ENCODE measurements at regions of chr2 and their contacts with region 1.

Region 1: GRCh38 chr2:201071479-201072200 is at the starts of genes HYCC2 and NDUFB3:
- DNase-seq: peak; percentile 95
- ATAC-seq: peak; percentile 83
- H3K4me3 ChIP-seq: peak within 1 kb of the TSS; percentile 81
- H3K27ac ChIP-seq: peak within 1 kb of the TSS; percentile 84
- H3K4me1 ChIP-seq: peaks cover 24% of the 10 kb centered on the region
- H3K27me3 ChIP-seq: no peaks in the 10 kb centered on the region
- CTCF ChIP-seq: no peak
- total RNA-seq, gene HYCC2: 3.6 and 5.5 TPM in 2 replicates
- total RNA-seq, gene NDUFB3: 154 and 176 TPM in 2 replicates

Region 2: DNA sequence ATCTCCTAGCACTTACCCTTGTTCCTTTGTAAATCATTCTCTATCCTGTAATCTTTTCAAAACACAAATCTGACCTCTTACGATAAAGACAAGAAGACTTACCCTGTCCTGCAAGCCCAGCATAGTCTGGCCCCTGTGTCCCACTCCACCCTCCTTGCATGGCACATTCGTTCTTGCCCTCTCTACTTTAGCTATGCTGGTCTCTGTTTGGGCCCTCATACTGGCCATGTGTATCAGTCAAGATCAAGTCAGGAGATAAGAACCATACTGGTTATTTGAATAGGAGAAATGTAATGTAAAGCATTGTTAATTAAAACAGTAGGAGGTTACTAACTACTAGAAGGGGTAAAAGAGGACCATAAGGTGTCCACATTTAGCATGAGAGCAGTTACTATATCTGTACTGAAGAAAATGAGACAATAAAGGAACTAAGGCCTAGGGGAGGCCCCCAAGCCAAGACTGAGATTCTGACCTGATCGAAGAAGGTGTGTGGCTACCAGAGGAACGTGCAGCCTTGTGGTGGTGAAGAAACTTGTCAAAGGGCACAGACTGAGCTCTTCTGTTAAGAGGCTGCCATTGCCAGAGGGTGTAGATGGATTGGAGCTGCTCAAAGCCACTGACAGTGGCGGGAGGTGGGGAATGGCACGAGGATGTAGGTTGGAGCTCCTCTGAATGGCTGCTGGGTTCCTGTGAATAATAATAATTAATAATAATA is 642.5 kb before region 1 on chr2:
- CTCF ChIA-PET with region 1: no interaction called
- POLR2A ChIA-PET with region 1: no interaction called
- intact Hi-C with region 1: no loop called
- DNase-seq: no peak
- ATAC-seq: no peak
- H3K4me3 ChIP-seq: no peak overlapping the region
- H3K27ac ChIP-seq: no peak overlapping the region
- H3K4me1 ChIP-seq: no peaks in the 10 kb centered on the region
- H3K27me3 ChIP-seq: no peaks in the 10 kb centered on the region
- CTCF ChIP-seq: no peak

Region 3: DNA sequence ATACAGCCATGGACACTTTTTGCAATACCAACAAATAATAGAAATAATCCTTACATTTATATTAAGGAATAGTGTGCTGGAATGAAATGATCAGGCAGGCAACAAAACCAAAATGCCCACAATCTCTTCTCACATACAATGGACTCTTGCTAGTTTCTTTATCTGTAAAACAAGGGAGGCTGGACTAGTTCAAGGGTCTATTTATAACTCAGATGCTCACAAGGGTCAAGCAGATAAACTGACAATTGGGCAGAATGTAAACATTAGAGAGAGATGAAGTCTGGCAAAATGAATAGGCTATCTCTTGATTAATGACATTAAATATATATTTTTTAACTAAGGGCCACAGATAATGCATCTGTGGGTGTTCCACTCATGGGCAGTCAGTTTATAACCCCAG is 194.2 kb before region 1 on chr2:
- CTCF ChIA-PET with region 1: no interaction called
- POLR2A ChIA-PET with region 1: no interaction called
- intact Hi-C with region 1: no loop called
- DNase-seq: no peak
- ATAC-seq: no peak
- H3K4me3 ChIP-seq: no peak overlapping the region
- H3K27ac ChIP-seq: no peak overlapping the region
- H3K4me1 ChIP-seq: no peaks in the 10 kb centered on the region
- H3K27me3 ChIP-seq: no peaks in the 10 kb centered on the region
- CTCF ChIP-seq: no peak

Region 4: DNA sequence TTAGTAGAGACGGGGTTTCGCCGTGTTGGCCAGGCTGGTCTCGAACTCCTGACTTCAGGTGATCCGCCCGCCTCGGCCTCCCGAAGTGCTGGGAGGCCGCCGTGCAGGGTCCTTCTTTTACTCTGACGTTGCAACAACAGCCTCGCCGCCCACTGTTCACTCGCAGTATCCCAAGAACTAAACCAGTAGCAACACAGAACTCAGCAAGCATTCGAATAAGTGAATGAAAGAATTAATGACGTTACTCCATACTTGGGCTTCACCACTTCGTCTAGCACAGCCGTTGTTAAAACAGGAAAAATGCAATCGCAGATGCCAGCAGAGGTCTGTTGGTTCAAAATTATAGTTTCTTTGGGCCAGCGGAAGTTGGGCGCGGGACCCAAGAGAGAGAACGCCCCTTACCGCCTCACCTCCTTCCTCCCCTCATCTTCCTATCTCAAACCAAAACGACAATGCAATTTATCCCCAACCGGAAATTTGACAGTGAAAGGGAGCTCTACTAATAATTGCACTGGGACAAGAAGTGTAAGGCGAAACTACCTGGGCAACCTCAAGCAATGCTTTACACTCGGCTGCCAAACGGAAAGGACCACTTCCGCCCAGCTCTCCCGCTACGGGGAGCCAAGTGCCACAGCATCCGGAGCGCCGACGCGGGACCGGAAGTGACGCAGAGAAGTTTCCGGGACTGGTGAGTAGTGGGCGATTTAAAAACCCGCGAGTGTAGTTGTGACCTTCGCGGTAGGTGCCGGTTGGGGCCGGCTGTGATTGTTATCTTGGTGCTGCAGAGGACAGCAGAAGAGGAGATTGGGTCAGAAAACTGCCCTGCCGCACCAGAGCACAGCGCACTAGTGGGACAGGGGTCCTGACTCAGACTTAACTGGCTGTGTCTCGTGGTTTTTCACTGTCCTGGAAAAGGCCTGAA is 182.7 kb before region 1 on chr2 and contains the starts of genes NIF3L1 and PPIL3:
- CTCF ChIA-PET with region 1: no interaction called
- POLR2A ChIA-PET with region 1: no interaction called
- intact Hi-C with region 1: loop called (anchors 1 kb)
- DNase-seq: peak; percentile 99
- ATAC-seq: peak; percentile 82
- H3K4me3 ChIP-seq: peak within 1 kb of the TSS; percentile 87
- H3K27ac ChIP-seq: peak within 1 kb of the TSS; percentile 96
- H3K4me1 ChIP-seq: peaks cover 9% of the 10 kb centered on the region
- H3K27me3 ChIP-seq: no peaks in the 10 kb centered on the region
- CTCF ChIP-seq: no peak
- total RNA-seq, gene NIF3L1: 63.1 and 81.5 TPM in 2 replicates
- total RNA-seq, gene PPIL3: 25.9 and 37.1 TPM in 2 replicates

Region 5: DNA sequence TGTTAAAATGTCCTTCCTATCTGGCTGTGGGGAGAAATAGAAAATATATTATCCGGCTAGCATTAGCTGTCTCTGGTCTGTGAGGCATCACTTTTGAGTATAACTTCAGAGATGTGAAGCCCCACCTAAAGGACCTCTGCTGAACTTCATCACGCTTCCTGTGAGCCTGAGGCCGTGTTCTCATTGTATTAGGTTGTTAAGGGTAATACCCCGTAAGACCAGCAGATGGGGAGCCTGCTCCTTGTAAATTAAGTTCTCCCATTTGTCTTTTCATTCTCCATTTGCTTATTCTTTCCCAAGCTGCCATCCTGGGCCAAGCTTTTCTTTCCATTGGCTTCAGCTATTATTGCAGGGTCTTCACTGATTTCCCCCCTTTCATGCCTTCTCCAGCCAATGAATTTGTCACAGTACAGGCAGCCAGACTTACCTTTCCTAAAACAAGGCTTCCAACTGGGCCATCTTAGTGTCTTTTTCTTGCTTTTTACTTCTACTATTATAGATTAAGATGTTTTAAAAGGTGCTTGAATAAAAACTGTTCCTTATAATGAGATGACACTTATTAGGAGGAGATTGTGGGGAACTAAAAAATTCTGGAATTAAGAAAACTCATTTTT is 170.1 kb before region 1 on chr2:
- CTCF ChIA-PET with region 1: interaction called, 6 read pairs
- POLR2A ChIA-PET with region 1: no interaction called
- intact Hi-C with region 1: loop called (anchors 1 kb)
- DNase-seq: peak; percentile 94
- ATAC-seq: peak; percentile 92
- H3K4me3 ChIP-seq: no peak overlapping the region
- H3K27ac ChIP-seq: no peak overlapping the region
- H3K4me1 ChIP-seq: no peaks in the 10 kb centered on the region
- H3K27me3 ChIP-seq: no peaks in the 10 kb centered on the region
- CTCF ChIP-seq: peak; percentile 86

Region 6: GRCh38 chr2:200963124-200963917 is 108.3 kb before region 1 on chr2 and contains the start of gene ORC2:
- CTCF ChIA-PET with region 1: interaction called, 12 read pairs
- POLR2A ChIA-PET with region 1: interaction called, 3 read pairs
- intact Hi-C with region 1: loop called (anchors 1 kb)
- DNase-seq: peak; percentile 99
- ATAC-seq: peak; percentile 93
- H3K4me3 ChIP-seq: peak within 1 kb of the TSS; percentile 81
- H3K27ac ChIP-seq: peak within 1 kb of the TSS; percentile 58
- H3K4me1 ChIP-seq: peaks cover 55% of the 10 kb centered on the region
- H3K27me3 ChIP-seq: no peaks in the 10 kb centered on the region
- CTCF ChIP-seq: peak; percentile 68
- total RNA-seq, gene ORC2: 17.7 and 25.9 TPM in 2 replicates

Region 7: GRCh38 chr2:201118121-201118960 is 46.7 kb after region 1 on chr2:
- CTCF ChIA-PET with region 1: interaction called, 5 read pairs
- POLR2A ChIA-PET with region 1: interaction called, 6 read pairs
- intact Hi-C with region 1: loop called (anchors 1 kb)
- DNase-seq: peak; percentile 87
- ATAC-seq: peak; percentile 40
- H3K4me3 ChIP-seq: peak overlapping the region; percentile 75
- H3K27ac ChIP-seq: peak overlapping the region; percentile 96
- H3K4me1 ChIP-seq: peaks cover 17% of the 10 kb centered on the region
- H3K27me3 ChIP-seq: no peaks in the 10 kb centered on the region
- CTCF ChIP-seq: peak; percentile 70

Region 8: GRCh38 chr2:201158111-201158929 is 86.7 kb after region 1 on chr2:
- CTCF ChIA-PET with region 1: interaction called, 15 read pairs
- POLR2A ChIA-PET with region 1: no interaction called
- intact Hi-C with region 1: loop called (anchors 1 kb)
- DNase-seq: peak; percentile 86
- ATAC-seq: peak; percentile 87
- H3K4me3 ChIP-seq: no peak overlapping the region
- H3K27ac ChIP-seq: peak overlapping the region; percentile 86
- H3K4me1 ChIP-seq: peaks cover 9% of the 10 kb centered on the region
- H3K27me3 ChIP-seq: no peaks in the 10 kb centered on the region
- CTCF ChIP-seq: peak; percentile 90

Region 9: DNA sequence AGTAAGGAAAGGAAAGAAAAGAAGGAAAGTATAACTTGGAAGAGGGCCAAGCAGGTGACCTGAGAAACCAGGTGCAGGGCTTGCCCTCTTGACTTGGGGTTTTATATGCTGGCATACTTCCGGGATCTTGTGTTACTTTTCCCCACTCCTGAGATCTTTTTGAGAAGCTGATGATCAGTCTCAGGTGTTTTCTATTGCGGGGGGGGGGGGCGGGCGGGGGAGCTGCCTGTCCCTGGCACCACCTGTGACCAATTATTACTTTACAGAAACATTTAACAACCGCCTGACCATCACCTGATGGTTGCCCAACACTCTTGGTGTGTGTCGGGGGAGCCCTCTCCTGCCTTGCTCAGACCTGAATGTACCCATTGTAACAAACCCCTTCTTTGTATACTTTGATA is 104.4 kb after region 1 on chr2:
- CTCF ChIA-PET with region 1: interaction called, 3 read pairs
- POLR2A ChIA-PET with region 1: no interaction called
- intact Hi-C with region 1: loop called (anchors 2 kb)
- DNase-seq: no peak
- ATAC-seq: no peak
- H3K4me3 ChIP-seq: no peak overlapping the region
- H3K27ac ChIP-seq: no peak overlapping the region
- H3K4me1 ChIP-seq: no peaks in the 10 kb centered on the region
- H3K27me3 ChIP-seq: no peaks in the 10 kb centered on the region
- CTCF ChIP-seq: no peak

Measured in PC-3 (cell line).